GM12878 (cell line): ENCODE measurements at regions of chr7 and their contacts with region 1.

Region 1: DNA sequence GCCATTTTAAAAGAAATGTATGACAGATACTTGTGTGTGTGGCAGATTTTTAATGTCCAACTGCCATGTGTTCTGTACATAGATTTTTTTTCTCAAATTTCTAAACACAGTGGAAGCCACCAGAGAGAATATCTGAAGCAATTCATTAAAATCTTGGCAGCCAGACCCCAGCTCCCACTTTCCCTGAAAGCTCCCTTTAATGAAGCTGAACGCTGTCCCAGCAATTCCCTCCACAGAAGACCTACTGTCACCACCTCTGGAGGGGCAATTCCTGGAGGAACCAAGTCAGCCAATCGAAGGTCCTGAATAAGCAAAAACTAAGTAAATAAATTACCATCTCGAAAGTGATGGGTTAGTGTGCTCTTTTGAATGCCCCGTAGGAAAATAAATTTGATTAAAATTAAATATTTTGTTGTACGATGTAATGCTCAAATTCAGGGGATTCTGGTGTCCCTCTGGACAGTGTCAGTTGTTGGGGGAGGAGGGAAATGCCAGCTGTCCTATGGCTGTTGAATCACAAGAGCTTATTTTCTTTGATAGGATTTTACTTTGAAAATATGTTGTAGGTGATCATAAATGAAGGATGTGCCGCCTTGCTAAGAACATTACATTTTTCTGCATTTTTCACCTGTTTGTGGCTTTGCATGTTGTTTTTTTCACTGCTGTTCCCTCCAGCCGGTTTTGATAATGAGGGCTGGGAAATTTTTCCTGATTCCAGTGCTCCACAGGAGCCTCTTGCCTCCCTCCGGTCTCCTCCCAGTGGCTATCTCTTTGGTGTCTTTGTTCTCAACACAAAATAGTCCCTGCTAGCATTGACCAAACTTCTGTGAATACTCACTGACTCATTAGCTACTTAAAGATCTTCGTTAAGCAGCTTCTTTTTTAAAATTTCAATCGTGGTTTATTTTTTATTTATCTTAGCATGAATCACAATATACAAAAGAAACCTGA is 9.2 kb upstream of the GSAP start:
- DNase-seq: no peak
- ATAC-seq: peak; percentile 61
- H3K4me3 ChIP-seq: peak overlapping the region; percentile 54; the same call in 1 of the 2 replicates
- H3K27ac ChIP-seq: peak overlapping the region; percentile 78
- H3K4me1 ChIP-seq: peaks cover 27% of the 10 kb centered on the region
- H3K27me3 ChIP-seq: no peaks in the 10 kb centered on the region
- CTCF ChIP-seq: no peak
- EP300 ChIP-seq: no peak
- POLR2A ChIP-seq: no peak
- RAD21 ChIP-seq: no peak

Region 2: GRCh38 chr7:77409739-77410547 is 15.4 kb before region 1 on chr7:
- CTCF ChIA-PET with region 1: interaction called, 59 read pairs
- POLR2A ChIA-PET with region 1: interaction called, 15 read pairs
- RAD21 ChIA-PET with region 1: interaction called, 32 read pairs
- SMC1A ChIA-PET with region 1: interaction called, 68 read pairs
- in situ Hi-C with region 1: no loop called
- intact Hi-C with region 1: no loop called
- DNase-seq: no peak
- ATAC-seq: no peak
- H3K4me3 ChIP-seq: no peak overlapping the region
- H3K27ac ChIP-seq: no peak overlapping the region
- H3K4me1 ChIP-seq: no peaks in the 10 kb centered on the region
- H3K27me3 ChIP-seq: no peaks in the 10 kb centered on the region
- CTCF ChIP-seq: no peak
- EP300 ChIP-seq: no peak
- POLR2A ChIP-seq: no peak
- RAD21 ChIP-seq: no peak

Region 3: DNA sequence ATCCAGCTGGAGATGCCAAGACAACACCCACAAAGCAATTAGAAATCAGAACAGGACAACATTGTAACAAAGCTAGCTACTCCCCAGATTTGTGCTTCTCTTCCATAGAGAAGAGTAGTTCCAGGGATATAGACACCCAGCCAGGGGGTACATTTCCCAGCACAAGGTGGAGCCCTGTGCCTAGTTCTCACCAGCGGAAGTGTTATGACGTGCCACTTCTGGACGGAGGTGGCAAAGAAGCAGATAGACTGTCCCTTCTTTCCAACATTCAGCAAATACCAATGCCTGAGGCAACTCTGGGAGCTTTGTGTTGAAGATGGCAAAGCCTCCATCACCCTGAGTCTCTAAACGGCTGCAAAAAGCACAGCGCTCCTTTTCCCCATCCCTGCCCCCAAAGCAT is 14.2 kb after region 1 on chr7:
- CTCF ChIA-PET with region 1: interaction called, 4 read pairs
- POLR2A ChIA-PET with region 1: interaction called, 3 read pairs
- RAD21 ChIA-PET with region 1: interaction called, 4 read pairs
- SMC1A ChIA-PET with region 1: interaction called, 22 read pairs
- in situ Hi-C with region 1: no loop called
- intact Hi-C with region 1: no loop called
- DNase-seq: no peak
- ATAC-seq: no peak
- H3K4me3 ChIP-seq: no peak overlapping the region
- H3K27ac ChIP-seq: no peak overlapping the region
- H3K4me1 ChIP-seq: no peaks in the 10 kb centered on the region
- H3K27me3 ChIP-seq: no peaks in the 10 kb centered on the region
- CTCF ChIP-seq: no peak
- EP300 ChIP-seq: no peak
- POLR2A ChIP-seq: no peak
- RAD21 ChIP-seq: 0 out of 2 replicates have a peak, but pooled peaks have one; percentile 21

Region 4: DNA sequence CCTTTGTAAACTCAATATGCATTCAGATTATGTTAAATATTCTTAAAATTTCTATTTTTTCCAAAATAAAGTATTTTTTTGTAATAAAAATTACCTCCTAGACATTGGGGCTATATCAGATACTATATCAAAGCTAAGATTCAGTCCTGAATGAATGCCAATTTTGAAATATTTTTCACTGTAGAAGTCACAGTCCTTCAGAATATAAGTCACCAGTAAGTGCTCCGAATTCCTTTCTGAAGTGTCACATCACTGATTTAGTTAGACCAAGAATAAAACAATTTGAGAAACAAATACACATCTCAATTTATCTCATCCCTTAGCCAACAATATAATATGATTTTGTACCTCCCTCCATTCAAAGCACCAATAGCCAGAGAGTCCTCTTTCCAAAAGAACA is 24.7 kb after region 1 on chr7:
- CTCF ChIA-PET with region 1: interaction called, 10 read pairs
- POLR2A ChIA-PET with region 1: interaction called, 4 read pairs
- RAD21 ChIA-PET with region 1: no interaction called
- SMC1A ChIA-PET with region 1: interaction called, 22 read pairs
- in situ Hi-C with region 1: no loop called
- intact Hi-C with region 1: no loop called
- DNase-seq: no peak
- ATAC-seq: no peak
- H3K4me3 ChIP-seq: no peak overlapping the region
- H3K27ac ChIP-seq: no peak overlapping the region
- H3K4me1 ChIP-seq: 0 out of 2 replicates have a peak, but pooled peaks cover 3% of the 10 kb centered on the region
- H3K27me3 ChIP-seq: no peaks in the 10 kb centered on the region
- CTCF ChIP-seq: no peak
- EP300 ChIP-seq: no peak
- POLR2A ChIP-seq: no peak
- RAD21 ChIP-seq: no peak